AG04450 (cell line): ENCODE measurements at regions of chr2 and their contacts with region 1.

Region 1: DNA sequence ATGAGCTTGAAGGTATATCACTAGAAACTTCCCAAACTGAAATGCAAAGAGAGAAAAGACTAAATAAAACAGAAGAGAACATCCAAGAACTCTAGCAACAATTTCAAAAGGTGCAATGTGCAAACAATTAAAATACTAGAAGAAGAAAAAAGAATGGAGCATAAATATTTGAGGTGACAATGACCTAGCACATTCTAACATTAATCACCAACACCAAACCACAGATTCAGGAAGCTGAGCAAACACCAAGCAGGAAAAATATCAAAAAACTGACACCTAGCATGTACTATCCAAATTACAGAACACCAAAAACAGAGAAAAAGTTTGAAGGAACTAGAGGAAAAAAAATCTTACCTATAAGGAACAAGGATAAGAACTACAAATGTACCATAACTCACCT is 460.8 kb downstream of the IRS1 start:
- DNase-seq: no peak
- H3K4me3 ChIP-seq: no peak overlapping the region
- H3K27ac ChIP-seq: no peak overlapping the region
- H3K27me3 ChIP-seq: no peaks in the 10 kb centered on the region
- CTCF ChIP-seq: no peak

Region 2: GRCh38 chr2:226362980-226363379 is 24.2 kb after region 1 on chr2:
- CTCF ChIA-PET with region 1: no interaction called
- POLR2A ChIA-PET with region 1: interaction called, 10 read pairs
- DNase-seq: peak; percentile 26
- H3K4me3 ChIP-seq: no peak overlapping the region
- H3K27ac ChIP-seq: no peak overlapping the region
- H3K27me3 ChIP-seq: no peaks in the 10 kb centered on the region
- CTCF ChIP-seq: no peak

Region 3: DNA sequence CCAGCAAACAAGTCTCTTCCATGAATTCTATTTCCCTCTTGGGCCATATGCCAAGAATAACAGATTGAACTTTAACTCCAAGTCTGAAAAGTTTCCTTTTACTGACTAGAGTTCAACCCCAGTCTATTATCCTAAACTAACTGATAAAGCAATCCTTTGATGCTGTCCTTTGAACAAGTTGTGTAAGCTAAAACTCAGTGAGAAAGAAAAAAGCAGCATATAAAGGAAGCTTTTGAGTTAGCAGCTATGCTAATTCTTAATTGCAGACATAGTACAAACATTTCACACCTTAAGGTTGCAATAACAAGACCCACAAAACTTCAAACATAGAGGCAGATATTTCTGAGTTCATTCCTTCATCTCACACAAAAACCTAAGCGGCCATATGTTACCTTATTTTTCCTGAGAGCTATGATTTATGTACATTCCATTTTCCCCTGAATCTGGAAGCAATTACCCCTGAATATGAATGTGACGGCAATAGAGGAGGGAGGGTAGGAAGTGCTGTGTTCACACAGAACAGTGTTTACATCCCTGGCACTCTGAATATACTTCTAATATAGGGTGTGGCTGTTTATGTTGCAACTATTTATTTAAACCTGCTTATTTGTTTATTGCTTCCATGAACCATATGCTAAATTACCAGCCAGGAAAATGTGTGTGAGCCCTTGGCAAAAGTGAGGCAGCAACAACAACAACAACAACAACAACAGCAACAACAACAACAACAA is 280.2 kb after region 1 on chr2:
- CTCF ChIA-PET with region 1: no interaction called
- POLR2A ChIA-PET with region 1: no interaction called
- DNase-seq: no peak
- H3K4me3 ChIP-seq: no peak overlapping the region
- H3K27ac ChIP-seq: no peak overlapping the region
- H3K27me3 ChIP-seq: no peaks in the 10 kb centered on the region
- CTCF ChIP-seq: no peak